Activated CD4-positive, alpha-beta memory T cell treated with anti-CD3 and anti-CD28 coated beads, Interleukin-2, amount 10 ng/mL, durations not matched to agents 7 days and 5 days (primary cell): ENCODE measurements at regions of chr3 and their contacts with region 1.

Region 1: GRCh38 chr3:177197041-177197727 is at the start of gene TBL1XR1:
- DNase-seq: peak; percentile 90
- H3K4me3 Mint-ChIP-seq: peak within 1 kb of the TSS; percentile 98
- H3K27ac Mint-ChIP-seq: peak within 1 kb of the TSS; percentile 97
- H3K4me1 Mint-ChIP-seq: peaks cover 63% of the 10 kb centered on the region
- H3K27me3 Mint-ChIP-seq: no peaks in the 10 kb centered on the region
- total RNA-seq, gene TBL1XR1: 178 to 187 TPM

Region 2: DNA sequence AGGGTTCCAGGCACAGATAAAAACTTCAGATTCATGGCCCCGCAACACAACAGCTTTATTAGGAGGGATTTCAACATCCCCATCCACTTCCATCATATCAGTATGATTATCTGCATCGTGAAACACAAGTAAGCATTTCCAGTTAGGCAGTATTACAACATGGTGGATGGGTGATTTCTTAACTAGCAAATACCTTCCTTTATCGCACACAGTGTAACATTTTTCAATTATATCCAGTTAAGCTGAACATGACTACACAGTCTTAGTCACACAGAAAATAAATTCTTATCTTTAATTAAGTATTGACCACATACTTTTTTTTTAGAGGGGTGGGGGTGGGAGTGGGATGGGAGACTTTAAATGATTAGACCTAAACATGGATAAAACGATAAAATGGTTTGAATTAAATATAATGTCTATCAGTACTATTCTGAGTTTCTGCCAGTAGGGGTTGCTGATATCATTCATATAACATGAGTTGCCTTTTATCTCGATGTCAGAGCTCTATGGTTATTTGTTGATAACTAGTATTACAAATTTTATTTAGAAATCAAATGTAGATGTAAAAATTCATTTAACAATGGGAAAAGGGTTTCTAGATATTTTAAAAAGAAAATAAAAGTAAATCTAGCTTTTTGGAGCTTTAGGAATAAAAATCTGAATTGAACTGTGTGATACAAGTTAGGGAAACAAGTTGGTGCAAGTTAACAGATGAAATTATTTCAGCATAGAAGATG is 146.5 kb before region 1 on chr3:
- CTCF ChIA-PET with region 1: interaction called, 14 read pairs
- POLR2A ChIA-PET with region 1: interaction called, 21 read pairs
- DNase-seq: no peak
- H3K4me3 Mint-ChIP-seq: no peak overlapping the region
- H3K27ac Mint-ChIP-seq: no peak overlapping the region
- H3K4me1 Mint-ChIP-seq: peaks cover 7% of the 10 kb centered on the region
- H3K27me3 Mint-ChIP-seq: no peaks in the 10 kb centered on the region

Region 3: DNA sequence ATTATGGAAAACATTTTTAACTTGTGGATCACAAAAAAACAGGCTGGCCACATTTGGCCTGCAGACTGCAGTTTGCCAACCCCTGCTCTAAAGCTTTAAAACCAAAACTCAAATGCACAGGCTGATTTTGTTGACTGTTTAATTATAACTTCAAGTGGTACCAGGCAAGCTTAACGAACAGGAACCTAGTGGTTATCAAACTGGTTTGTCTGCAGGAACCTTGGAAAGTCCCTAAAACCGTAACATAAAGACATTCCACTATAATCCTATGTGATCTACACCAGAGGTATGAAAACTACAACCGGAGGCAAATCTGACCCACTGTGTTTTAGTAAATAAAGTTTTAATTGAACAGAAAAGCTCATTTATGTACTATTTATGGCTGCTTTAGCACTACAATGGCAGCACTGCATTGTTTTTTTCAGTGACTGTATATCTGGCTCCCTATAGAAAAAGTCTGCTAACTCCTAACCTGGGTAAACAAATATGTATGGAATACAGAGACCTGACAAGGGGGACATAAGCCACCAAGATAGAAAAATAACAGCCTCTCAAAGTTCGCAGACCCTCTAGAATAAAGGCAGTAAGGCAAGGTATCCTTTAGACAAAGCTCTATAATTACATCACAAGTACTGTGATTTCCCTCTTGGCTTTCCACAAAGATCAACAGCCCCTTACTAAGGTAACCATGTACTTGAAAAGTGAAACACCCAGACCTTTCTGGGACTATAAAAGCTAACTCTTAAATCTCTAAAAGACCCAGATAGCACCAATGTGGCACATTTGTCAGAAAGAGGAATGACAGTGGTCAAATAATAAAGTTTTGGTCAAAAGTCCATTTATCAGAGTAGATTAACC is 52.0 kb before region 1 on chr3:
- CTCF ChIA-PET with region 1: interaction called, 5 read pairs
- POLR2A ChIA-PET with region 1: interaction called, 59 read pairs
- DNase-seq: no peak
- H3K4me3 Mint-ChIP-seq: peak overlapping the region; percentile 1
- H3K27ac Mint-ChIP-seq: peak overlapping the region; percentile 67
- H3K4me1 Mint-ChIP-seq: peaks cover 64% of the 10 kb centered on the region
- H3K27me3 Mint-ChIP-seq: no peaks in the 10 kb centered on the region

Region 4: DNA sequence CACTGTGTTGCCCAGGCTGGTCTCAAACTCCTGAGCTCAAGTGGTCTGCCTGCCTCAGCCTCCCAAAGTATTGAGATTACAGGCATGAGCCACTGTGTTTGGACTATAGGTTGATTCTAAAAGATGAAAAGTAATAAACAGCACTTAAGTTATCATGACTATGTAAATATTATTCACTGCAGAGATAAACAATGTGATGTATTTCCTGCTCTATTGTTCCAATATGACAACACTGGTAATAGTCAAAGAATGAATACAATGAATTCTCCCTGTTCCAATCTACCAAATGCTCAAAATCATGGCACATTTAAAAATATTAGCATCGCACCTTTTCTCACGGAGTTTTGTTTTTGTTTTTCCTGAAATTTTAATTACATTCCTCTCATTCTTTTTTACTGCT is 36.9 kb after region 1 on chr3:
- CTCF ChIA-PET with region 1: no interaction called
- POLR2A ChIA-PET with region 1: no interaction called
- DNase-seq: no peak
- H3K4me3 Mint-ChIP-seq: no peak overlapping the region
- H3K27ac Mint-ChIP-seq: no peak overlapping the region
- H3K4me1 Mint-ChIP-seq: no peaks in the 10 kb centered on the region
- H3K27me3 Mint-ChIP-seq: no peaks in the 10 kb centered on the region

Region 5: DNA sequence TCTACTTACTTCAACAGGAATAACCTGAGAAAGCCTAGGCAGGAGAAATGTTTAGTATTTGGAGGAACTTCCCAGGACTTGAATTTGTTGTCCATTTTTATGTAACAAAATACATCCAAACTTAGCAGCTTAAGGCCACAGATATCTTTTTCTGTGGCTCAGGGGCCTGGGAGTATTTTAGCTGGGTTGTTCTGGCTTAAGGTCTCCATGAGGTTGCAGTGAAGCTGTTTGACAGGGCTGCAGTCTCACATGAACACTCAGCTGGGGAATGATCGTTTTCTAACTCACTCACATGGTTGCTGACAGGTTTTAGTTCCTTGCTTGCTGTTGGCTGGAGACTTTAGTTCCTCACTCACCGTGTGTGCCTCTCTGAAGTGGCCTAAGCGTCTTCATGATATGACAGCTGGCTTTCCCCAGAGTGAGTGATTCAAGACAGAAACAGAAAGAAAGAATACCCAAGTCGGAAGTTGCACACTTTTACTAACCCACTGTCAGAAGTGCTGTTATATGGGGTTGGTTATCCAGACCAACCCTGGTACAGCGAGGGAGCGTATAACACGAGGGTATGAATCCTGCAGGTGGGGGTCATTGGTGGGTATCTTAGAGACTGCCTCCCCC is 229.8 kb after region 1 on chr3:
- CTCF ChIA-PET with region 1: interaction called, 3 read pairs
- POLR2A ChIA-PET with region 1: interaction called, 18 read pairs
- DNase-seq: peak; percentile 65
- H3K4me3 Mint-ChIP-seq: peak overlapping the region; percentile 56
- H3K27ac Mint-ChIP-seq: peak overlapping the region; percentile 73
- H3K4me1 Mint-ChIP-seq: peaks cover 26% of the 10 kb centered on the region
- H3K27me3 Mint-ChIP-seq: peaks cover 6% of the 10 kb centered on the region

Region 6: GRCh38 chr3:177538750-177539730 is 341.9 kb after region 1 on chr3:
- CTCF ChIA-PET with region 1: no interaction called
- POLR2A ChIA-PET with region 1: interaction called, 12 read pairs
- DNase-seq: peak; percentile 47
- H3K4me3 Mint-ChIP-seq: peak overlapping the region; percentile 43
- H3K27ac Mint-ChIP-seq: peak overlapping the region; percentile 85
- H3K4me1 Mint-ChIP-seq: peaks cover 35% of the 10 kb centered on the region
- H3K27me3 Mint-ChIP-seq: no peaks in the 10 kb centered on the region

Region 7: DNA sequence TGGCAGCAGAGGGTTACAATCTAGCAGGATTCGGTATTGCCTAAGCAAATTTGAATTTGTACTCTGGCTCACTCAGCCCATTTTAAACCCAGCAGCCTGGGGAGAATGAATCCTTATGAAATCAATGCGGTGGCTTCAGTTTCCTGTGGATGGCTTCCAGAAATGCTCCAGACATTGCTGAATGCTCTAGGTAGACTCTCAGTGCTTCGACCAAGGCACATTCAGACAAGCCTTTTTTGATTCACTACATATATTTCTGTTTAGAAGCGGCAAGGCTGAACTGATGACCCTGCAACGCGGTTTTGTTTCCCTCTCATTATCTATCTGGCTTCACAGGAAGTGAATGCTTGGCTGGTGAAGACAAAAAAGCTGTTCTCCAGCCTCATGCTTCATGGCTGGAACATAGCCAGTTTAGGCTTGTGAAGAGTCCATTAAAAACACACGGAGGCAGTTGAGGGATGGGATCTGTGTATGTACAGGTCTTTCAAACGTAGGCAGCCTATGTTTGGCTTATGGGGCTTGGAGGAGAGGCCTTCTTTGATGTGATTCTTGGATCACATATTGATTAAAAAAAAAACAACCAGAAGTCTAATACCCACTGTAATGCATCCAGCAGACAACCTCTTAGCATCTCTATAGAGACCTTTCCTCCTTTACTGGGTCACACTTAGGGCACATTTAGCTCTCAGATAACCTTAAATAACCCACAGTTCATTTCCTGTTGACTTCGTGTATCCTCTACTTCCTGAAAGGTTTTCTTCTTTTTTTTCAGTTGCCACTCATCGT is 400.3 kb after region 1 on chr3:
- CTCF ChIA-PET with region 1: no interaction called
- POLR2A ChIA-PET with region 1: interaction called, 10 read pairs
- DNase-seq: peak; percentile 55
- H3K4me3 Mint-ChIP-seq: peak overlapping the region; percentile 27
- H3K27ac Mint-ChIP-seq: peak overlapping the region; percentile 95
- H3K4me1 Mint-ChIP-seq: peaks cover 64% of the 10 kb centered on the region
- H3K27me3 Mint-ChIP-seq: no peaks in the 10 kb centered on the region

Region 8: DNA sequence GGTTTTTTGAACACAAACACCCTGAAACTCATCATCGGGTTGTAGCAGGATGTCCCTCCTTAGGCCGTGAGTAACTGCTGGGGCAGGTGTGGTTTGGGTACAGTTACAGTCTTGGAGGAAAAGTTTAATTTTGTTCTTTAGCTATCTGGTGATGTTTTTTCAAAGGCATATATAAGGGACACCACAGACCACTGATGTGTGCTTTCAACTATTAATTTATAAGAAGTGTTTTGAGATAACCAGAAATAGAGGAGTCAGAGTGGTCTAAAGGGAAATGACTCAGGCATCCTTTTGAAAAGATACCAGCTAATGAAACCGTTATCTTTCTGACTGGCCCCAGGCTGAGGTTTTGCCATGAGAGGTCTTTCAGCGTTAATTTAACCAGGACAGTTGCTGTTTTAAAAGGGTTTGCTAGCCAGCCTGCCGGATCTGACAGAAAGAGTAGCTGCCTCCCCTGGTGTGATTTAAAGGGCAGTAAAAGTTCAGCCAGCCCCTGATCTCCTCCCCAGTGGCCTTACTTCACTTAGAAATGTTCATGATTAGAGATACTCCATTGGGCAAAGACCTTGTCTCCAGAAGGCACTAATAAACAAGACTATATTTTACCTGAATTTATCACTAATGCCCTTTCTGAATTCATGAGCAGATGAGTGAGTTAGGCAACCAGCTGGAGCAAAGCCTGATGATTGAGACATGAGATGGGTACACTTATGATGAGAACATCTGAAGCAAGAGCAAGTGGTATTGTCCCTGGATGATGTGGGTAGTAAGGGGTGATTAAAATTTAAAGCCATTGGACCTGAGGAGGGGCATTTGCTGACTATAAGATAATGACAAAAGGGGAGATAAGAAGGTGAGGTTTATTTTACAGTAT is 482.6 kb after region 1 on chr3:
- CTCF ChIA-PET with region 1: no interaction called
- POLR2A ChIA-PET with region 1: interaction called, 10 read pairs
- DNase-seq: peak; percentile 61
- H3K4me3 Mint-ChIP-seq: no peak overlapping the region
- H3K27ac Mint-ChIP-seq: peak overlapping the region; percentile 84
- H3K4me1 Mint-ChIP-seq: peaks cover 37% of the 10 kb centered on the region
- H3K27me3 Mint-ChIP-seq: no peaks in the 10 kb centered on the region